PC-9 (cell line): ENCODE measurements at regions of chr11 and their contacts with region 1.

Region 1: DNA sequence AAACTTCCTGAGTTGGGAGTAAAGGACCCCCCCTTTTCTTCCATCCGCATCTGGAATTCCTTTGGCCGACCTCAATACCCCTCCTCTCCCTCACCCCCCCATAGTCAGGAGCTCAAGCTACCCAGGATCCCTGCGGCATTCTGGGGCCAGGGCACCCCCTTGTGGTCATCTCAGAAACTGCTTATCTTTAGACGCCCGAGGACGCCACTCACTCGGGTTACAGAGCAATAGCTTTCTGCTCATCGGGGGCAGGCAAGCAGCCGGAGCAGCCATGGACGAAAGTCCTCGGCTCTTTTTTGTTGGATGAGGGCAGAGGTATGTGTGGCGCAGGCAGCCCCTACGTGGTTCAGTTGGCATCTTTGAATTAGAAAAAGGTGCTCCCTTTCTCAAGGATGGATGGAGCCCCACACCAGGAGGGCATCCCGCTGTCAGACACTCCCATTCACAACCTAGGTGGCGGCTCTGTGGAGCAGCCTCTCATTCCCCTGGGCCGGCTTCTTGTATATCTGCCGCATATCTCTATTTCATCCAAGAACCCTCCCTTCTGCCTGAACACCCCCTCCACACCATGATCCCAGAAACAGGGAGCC is 2.3 kb downstream of the C1QTNF5 start:
- DNase-seq: peak; percentile 58 to 63
- H3K4me3 ChIP-seq: no peak overlapping the region
- H3K27ac ChIP-seq: no peak overlapping the region
- H3K4me1 ChIP-seq: peaks cover 16% of the 10 kb centered on the region
- H3K27me3 ChIP-seq: peaks cover 10% of the 10 kb centered on the region
- CTCF ChIP-seq: peak; percentile 94

Region 2: DNA sequence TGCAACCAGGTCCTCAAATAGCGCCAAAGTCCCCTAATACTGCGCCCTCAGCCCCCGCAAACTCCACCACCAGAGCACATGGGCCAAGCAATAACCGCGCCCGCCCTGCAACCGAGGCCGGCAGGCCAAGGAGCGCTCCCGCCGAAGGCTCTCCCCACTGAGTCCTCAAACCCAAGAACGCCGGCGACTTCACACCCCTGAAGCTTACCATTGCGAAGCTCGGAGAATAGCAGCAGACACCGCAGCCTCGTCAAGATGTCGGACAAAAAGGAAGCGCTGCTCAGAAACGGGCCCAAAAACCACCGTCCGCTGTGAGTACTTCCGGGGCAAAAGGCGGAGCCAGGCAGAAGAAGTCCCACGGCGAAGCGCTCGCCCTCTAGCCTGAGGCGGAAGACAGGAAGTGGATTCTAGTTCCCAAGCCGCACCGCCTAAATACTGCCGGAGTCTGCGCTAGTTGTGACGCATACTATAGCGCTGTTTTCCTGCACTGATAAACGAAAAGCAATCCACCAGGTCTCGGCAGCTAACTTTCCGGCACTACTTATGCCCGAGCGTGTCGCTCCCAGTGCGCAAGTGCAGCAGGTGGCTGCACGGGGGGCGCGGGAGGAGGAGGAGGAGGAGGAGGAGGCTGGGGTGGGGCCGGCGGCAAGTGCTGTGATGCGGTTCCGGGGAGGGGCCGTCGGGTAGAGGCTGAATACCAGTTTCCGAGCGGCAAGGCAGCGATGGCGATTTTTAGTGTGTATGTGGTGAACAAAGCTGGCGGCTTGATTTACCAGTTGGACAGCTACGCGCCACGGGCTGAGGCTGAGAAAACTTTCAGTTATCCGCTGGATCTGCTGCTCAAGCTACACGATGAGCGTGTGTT is 320.1 kb before region 1 on chr11 and contains the starts of genes RPS25 and TRAPPC4:
- CTCF ChIA-PET with region 1: no interaction called
- POLR2A ChIA-PET with region 1: interaction called, 30 read pairs
- intact Hi-C with region 1: no loop called
- DNase-seq: peak; percentile 89 to 96
- H3K4me3 ChIP-seq: peak within 1 kb of the TSS; percentile 98
- H3K27ac ChIP-seq: peak within 1 kb of the TSS; percentile 78
- H3K4me1 ChIP-seq: peaks cover 36% of the 10 kb centered on the region
- H3K27me3 ChIP-seq: no peaks in the 10 kb centered on the region
- CTCF ChIP-seq: no peak
- total RNA-seq, gene RPS25: 954 and 984 TPM in 2 replicates
- total RNA-seq, gene TRAPPC4: 49.2 and 51.4 TPM in 2 replicates

Region 3: GRCh38 chr11:119323538-119324033 is 14.8 kb before region 1 on chr11:
- CTCF ChIA-PET with region 1: interaction called, 3 read pairs
- POLR2A ChIA-PET with region 1: interaction called, 33 read pairs
- intact Hi-C with region 1: no loop called
- DNase-seq: peak; percentile 59 to 71
- H3K4me3 ChIP-seq: no peak overlapping the region
- H3K27ac ChIP-seq: no peak overlapping the region
- H3K4me1 ChIP-seq: peaks cover 22% of the 10 kb centered on the region
- H3K27me3 ChIP-seq: no peaks in the 10 kb centered on the region
- CTCF ChIP-seq: peak; percentile 96

Region 4: GRCh38 chr11:119381181-119381988 is 43.0 kb after region 1 on chr11 and contains the start of gene USP2:
- CTCF ChIA-PET with region 1: interaction called, 6 read pairs
- POLR2A ChIA-PET with region 1: interaction called, 56 read pairs
- intact Hi-C with region 1: no loop called
- DNase-seq: peak; percentile 97 to 98
- H3K4me3 ChIP-seq: peak within 1 kb of the TSS; percentile 56
- H3K27ac ChIP-seq: no peak within 1 kb of the TSS
- H3K4me1 ChIP-seq: peaks cover 37% of the 10 kb centered on the region
- H3K27me3 ChIP-seq: no peaks in the 10 kb centered on the region
- CTCF ChIP-seq: peak; percentile 94
- total RNA-seq, gene USP2: 2.1 and 2.7 TPM in 2 replicates

Region 5: DNA sequence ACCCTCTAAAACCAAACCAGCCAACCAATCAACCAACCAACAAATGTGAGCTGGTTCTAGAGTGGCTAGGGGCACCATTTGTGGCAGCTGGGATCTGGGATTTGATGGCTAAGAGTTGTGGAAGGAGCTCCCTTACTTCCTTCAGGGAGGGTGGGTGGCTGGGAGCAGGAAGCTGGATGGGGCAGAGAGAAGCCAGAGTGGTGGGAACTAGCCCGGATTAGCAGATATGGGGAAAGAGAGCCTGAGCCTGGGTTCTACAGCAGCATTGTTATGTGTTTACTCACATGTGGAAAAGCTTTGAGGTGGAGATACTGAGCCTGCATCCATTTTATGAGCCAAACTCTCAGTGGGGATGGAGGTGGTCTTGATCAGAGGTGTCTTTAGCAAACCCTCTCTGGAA is 115.5 kb after region 1 on chr11:
- CTCF ChIA-PET with region 1: interaction called, 28 read pairs
- POLR2A ChIA-PET with region 1: no interaction called
- intact Hi-C with region 1: no loop called
- DNase-seq: no peak
- H3K4me3 ChIP-seq: no peak overlapping the region
- H3K27ac ChIP-seq: no peak overlapping the region
- H3K4me1 ChIP-seq: no peaks in the 10 kb centered on the region
- H3K27me3 ChIP-seq: no peaks in the 10 kb centered on the region
- CTCF ChIP-seq: no peak